Activated CD4-positive, alpha-beta T cell treated with anti-CD3 and anti-CD28 coated beads, Interleukin-2, amount 10 ng/mL, durations not matched to agents 24 days and 14 days (primary cell): ENCODE measurements at regions of chr2 and their contacts with region 1.

Region 1: DNA sequence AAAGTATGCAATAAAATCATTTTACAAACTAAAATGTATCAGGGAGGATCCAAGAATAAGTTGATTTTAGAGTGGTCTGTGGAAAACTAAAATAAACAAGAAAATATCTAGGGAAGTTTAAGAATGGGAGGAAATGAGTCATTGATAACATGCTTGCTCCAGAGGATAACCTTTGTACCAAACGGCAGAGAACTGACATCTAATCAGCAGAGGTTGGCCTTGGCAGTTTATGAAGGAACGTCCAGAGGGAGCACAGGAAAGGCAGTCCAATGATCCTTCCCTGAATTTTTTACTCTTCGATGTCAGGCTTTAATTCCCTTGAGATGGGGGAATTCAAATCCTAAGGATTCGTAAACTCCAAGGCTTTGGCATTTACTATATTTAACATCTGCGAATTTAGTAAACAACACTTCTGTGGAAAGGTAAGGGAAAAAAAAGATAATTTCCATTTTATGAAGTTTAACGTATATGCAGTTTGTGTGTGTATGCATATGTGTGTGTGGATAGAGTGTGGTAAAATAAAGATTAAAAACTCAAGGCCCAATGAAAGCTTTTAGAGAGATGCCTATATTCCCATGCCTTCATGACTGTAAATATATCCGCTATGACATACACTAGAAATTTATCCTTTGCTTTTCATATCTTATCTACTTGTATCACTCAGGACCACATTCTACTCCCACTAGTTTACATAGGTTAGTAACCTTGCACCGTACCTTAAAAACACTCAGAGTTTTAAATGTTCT is 8.7 kb upstream of the INPP1 start:
- DNase-seq: no peak
- H3K4me3 Mint-ChIP-seq: no peak overlapping the region
- H3K27ac Mint-ChIP-seq: no peak overlapping the region
- H3K4me1 Mint-ChIP-seq: no peaks in the 10 kb centered on the region
- H3K27me3 Mint-ChIP-seq: peaks cover 31% of the 10 kb centered on the region

Region 2: GRCh38 chr2:189770590-189771322 is 563.9 kb before region 1 on chr2:
- intact Hi-C with region 1: no loop called
- DNase-seq: no peak
- H3K4me3 Mint-ChIP-seq: no peak overlapping the region
- H3K27ac Mint-ChIP-seq: no peak overlapping the region
- H3K4me1 Mint-ChIP-seq: no peaks in the 10 kb centered on the region
- H3K27me3 Mint-ChIP-seq: no peaks in the 10 kb centered on the region

Region 3: GRCh38 chr2:190050003-190050402 is 284.6 kb before region 1 on chr2:
- intact Hi-C with region 1: no loop called
- DNase-seq: no peak
- H3K4me3 Mint-ChIP-seq: no peak overlapping the region
- H3K27ac Mint-ChIP-seq: no peak overlapping the region
- H3K4me1 Mint-ChIP-seq: no peaks in the 10 kb centered on the region
- H3K27me3 Mint-ChIP-seq: peaks cover 6% of the 10 kb centered on the region

Region 4: GRCh38 chr2:190369635-190370034 is 35.0 kb after region 1 on chr2:
- intact Hi-C with region 1: loop called (anchors 5 kb)
- DNase-seq: no peak
- H3K4me3 Mint-ChIP-seq: no peak overlapping the region
- H3K27ac Mint-ChIP-seq: no peak overlapping the region
- H3K4me1 Mint-ChIP-seq: no peaks in the 10 kb centered on the region
- H3K27me3 Mint-ChIP-seq: no peaks in the 10 kb centered on the region